Ascending aorta (tissue), 2 donors: ENCODE measurements at regions of chr6 and their contacts with region 1.

Region 1: DNA sequence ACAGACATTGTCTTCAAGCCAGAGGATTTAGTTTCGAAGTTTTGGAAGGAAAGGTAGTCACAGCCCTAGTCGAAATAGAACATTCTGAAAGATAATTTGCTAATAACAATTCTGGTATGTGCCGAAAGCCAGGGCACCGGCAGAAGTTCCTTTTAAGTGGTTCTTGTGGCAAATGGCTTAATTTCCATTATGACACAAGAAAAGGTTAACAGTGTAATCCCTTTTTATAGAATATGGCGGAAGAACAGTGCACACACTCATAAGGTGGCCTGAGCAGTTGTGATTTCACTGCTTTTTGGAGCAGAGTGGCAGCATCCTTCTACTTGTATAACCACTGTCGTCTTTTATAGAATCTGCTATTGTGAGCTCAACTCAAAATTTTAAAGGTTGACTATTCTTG is 152.4 kb downstream of the SASH1 start:
- DNase-seq: no peak
- H3K4me3 ChIP-seq: no peak overlapping the region
- H3K27ac ChIP-seq: peak overlapping the region; percentile 63 to 78
- H3K4me1 ChIP-seq: peaks cover 0 to 45% of the 10 kb centered on the region in 2 donors
- H3K27me3 ChIP-seq: no peaks in the 10 kb centered on the region
- CTCF ChIP-seq: no peak

Region 2: DNA sequence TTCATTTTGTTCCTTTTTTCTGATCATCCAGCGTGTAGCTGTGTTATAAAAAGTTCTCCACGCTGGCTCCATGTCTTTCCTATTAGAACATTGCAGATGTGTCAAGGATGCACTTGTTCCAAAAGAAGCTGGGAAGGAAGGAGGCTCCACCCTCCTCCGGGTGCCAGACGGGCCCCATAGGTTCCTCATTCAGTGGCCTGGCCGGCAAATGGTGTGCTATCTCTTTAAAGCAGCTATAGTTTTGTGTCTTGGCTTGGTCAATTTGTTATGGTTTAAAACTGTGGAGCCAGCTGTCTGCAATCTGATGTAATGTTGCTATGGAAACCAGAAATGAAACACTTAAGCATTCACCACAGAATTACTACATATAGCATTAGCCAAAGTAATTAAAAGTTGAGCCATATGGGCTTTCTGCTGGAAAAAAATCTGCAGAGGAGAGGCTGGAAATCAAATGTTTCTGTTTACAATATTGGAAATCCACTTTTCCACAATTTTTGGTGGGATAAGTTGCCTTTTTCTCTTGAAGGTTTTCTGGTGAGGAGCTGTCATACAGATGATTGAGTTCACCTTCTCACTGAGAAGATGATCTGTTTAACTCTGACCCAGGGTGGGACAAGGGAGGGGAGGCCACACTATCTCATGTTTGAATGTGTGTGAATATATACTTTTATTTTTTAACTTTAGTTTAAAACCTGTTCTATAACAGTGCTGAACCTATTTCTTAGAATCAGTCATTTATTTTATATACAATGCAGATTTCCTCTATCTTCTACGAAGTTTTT is 15.0 kb after region 1 on chr6:
- intact Hi-C with region 1: loop called (anchors 2 kb)
- DNase-seq: peak in 1 of 2 donors; percentile 89
- H3K4me3 ChIP-seq: peak overlapping the region; percentile 51 to 67
- H3K27ac ChIP-seq: peak overlapping the region; percentile 84 to 86
- H3K4me1 ChIP-seq: peaks cover 0 to 9% of the 10 kb centered on the region in 2 donors
- H3K27me3 ChIP-seq: no peaks in the 10 kb centered on the region
- CTCF ChIP-seq: no peak

Region 3: DNA sequence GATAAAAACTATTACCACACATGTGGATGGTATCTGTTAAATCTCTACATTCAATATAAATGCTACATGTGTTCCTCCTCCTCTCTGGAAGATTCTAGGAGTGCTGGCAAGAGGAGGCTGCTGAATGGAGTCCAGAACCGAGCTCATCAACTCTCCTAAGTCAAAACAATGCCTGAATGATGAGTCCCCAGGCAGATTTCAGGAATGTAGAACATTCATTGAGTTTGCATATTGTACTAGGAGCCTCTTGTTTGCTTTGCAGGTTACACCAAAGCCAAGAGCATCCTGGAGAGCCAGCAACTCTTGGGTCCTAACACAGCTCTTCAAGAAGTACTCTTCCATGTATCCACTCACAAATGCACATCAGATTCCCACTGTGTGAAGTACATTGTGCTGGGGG is 134.2 kb after region 1 on chr6:
- intact Hi-C with region 1: no loop called
- DNase-seq: no peak
- H3K4me3 ChIP-seq: no peak overlapping the region
- H3K27ac ChIP-seq: no peak overlapping the region
- H3K4me1 ChIP-seq: no peaks in the 10 kb centered on the region
- H3K27me3 ChIP-seq: no peaks in the 10 kb centered on the region
- CTCF ChIP-seq: no peak